Panc1 (cell line): ENCODE measurements at regions of chr5 and their contacts with region 1.

Region 1: GRCh38 chr5:150560401-150561193 is 52.7 kb downstream of the NDST1 start:
- DNase-seq: peak; percentile 74
- ATAC-seq: peak; percentile 86
- H3K4me3 ChIP-seq: 0 out of 4 replicates have a peak overlapping the region, but pooled peaks of 1 of the 2 experiments have one; percentile 3
- H3K27ac ChIP-seq: peak overlapping the region; percentile 81
- H3K4me1 ChIP-seq: peaks cover 45% of the 10 kb centered on the region
- H3K27me3 ChIP-seq: no peaks in the 10 kb centered on the region
- CTCF ChIP-seq: peak; percentile 87

Region 2: DNA sequence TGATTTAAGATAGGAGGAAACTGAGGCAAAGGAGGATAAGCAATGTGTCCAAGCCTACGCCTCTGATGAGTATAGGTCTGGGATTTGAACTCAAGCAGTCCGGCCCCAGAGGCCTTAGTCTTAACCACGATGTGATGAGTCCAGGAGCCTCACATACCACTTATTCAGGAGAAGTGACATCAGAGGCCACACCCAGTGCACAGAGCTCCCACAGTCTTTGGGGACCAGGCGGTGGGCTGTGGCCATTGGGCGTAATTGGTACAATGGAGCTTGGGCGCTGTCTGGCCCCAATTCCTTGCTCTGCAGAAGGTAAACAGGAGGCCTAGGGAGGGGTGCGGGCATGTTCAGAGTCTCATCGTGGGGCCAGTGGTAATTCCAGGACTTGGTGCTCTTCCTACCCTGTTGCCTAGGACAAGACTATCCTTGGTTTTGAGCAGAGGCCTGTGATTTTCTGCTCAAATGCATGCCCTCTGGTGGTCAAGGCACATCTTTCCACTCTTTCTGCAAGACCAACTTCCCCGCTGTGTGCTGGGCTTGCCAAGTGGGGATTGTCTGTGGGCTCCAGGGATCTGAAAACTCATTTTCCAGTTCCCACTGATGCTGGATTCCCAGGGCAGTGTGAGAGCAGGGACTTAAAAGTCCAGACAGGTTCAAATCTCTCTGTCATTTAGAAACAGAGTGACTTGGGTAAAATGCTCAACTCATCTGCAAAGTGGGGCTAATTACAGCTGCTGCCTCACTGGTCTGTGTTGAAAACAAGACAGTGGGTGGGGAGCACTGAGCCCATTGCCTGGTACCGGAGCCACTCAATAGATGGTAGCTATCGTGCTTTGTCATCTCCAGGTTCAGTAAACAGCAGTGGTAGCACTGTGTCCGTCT is 36.9 kb before region 1 on chr5:
- CTCF ChIA-PET with region 1: no interaction called
- POLR2A ChIA-PET with region 1: no interaction called
- in situ Hi-C with region 1: no loop called
- intact Hi-C with region 1: no loop called
- DNase-seq: peak; percentile 41
- ATAC-seq: peak; percentile 80
- H3K4me3 ChIP-seq: no peak overlapping the region
- H3K27ac ChIP-seq: peak overlapping the region; percentile 69
- H3K4me1 ChIP-seq: peaks cover 52% of the 10 kb centered on the region
- H3K27me3 ChIP-seq: no peaks in the 10 kb centered on the region
- CTCF ChIP-seq: peak; percentile 83; the same call in 1 of the 2 replicates

Region 3: DNA sequence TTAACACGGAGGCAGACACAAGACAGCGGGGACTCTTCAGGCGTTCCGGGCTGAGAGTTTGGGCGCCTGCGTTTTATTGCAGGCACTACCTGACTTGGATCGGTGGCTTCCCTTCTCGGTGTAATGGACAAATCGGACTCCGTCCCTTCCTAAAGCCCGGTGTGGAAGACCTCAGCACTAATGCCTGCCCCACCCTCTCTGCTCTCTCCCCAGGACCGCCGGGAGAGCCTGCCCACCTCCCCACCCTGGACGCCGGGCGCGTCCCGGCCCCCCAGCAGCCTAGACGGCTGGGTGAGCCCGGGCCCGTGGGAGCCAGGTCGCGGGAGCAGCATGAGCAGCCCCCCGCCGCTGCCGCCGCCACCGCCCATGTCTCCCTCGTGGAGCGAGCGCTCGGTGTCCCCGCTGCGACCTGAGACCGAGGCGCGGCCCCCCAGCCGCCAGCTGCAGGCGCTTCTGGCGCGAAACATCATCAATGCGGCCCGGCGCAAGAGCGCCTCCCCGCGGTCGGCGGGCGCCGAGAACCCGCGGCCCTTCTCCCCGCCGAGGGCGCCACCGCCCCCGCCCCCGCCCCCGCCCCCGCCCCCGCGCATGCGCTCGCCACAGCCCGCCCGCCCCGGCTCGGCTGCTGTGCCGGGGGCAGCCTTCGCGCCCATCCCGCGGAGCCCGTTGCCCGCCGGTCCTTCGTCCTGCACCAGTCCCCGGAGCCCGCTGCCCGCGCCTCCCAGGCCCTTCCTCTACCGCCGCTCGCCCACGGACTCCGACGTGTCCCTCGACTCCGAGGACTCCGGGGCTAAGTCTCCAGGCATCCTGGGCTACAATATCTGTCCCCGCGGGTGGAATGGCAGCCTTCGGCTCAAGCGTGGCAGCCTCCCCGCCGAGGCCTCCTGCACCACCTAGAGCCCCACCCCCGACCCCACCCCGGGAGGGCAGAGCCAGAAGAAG is 95.9 kb after region 1 on chr5:
- CTCF ChIA-PET with region 1: interaction called, 4 read pairs
- POLR2A ChIA-PET with region 1: interaction called, 3 read pairs
- in situ Hi-C with region 1: no loop called
- intact Hi-C with region 1: loop called (anchors 1 kb)
- DNase-seq: no peak
- ATAC-seq: peak; percentile 80
- H3K4me3 ChIP-seq: peak overlapping the region; percentile 49 to 60
- H3K27ac ChIP-seq: peak overlapping the region; percentile 86
- H3K4me1 ChIP-seq: peaks cover 21% of the 10 kb centered on the region
- H3K27me3 ChIP-seq: no peaks in the 10 kb centered on the region
- CTCF ChIP-seq: peak; percentile 93

Region 4: DNA sequence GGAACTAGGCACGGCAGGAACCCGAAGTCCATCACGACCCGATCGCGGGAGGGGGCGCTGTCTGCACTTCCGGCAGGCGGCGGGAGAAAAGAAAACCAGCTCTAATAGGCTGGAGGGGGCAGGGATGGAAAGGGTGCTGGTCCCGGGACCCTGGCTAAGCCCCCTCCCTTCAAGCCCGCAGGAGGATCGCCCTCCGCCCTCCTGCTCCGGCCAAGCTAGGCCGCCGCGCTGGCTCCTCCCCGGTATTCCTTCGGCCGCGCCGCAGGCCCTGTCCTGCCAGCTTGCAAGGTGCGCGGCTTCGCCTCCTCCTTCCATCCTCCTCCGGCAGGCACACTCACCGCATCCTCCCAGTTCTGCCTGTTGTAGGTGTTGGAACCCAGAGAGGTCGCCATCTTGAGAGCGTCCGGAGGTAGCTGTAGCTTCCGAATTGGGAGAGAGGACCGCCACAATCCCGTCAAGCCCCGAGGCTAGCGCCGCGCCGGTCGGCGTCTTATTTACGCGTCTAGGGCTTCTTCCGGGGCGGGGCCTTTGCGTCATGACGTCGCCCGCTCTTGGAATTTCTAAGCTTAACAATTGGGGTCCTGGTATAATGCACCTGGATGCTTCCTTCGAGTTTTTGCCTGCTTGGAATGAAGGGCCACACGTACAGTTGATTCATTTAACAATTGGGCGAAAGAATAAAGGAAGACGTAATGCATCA is 140.1 kb after region 1 on chr5 and contains the start of gene RBM22:
- CTCF ChIA-PET with region 1: interaction called, 3 read pairs
- POLR2A ChIA-PET with region 1: no interaction called
- in situ Hi-C with region 1: no loop called
- intact Hi-C with region 1: loop called (anchors 5 kb)
- DNase-seq: peak; percentile 62
- ATAC-seq: peak; percentile 98
- H3K4me3 ChIP-seq: peak within 1 kb of the TSS; percentile 89 to 98
- H3K27ac ChIP-seq: peak within 1 kb of the TSS; percentile 90
- H3K4me1 ChIP-seq: peaks cover 14% of the 10 kb centered on the region
- H3K27me3 ChIP-seq: no peaks in the 10 kb centered on the region
- CTCF ChIP-seq: peak; percentile 82
- total RNA-seq, gene RBM22: 54.3 TPM

Region 5: GRCh38 chr5:150801117-150801927 is 240.7 kb after region 1 on chr5:
- CTCF ChIA-PET with region 1: no interaction called
- POLR2A ChIA-PET with region 1: no interaction called
- in situ Hi-C with region 1: no loop called
- intact Hi-C with region 1: loop called (anchors 10 kb)
- DNase-seq: peak; percentile 87
- ATAC-seq: peak; percentile 95
- H3K4me3 ChIP-seq: peak overlapping the region; percentile 38 to 65
- H3K27ac ChIP-seq: peak overlapping the region; percentile 82
- H3K4me1 ChIP-seq: peaks cover 12% of the 10 kb centered on the region
- H3K27me3 ChIP-seq: no peaks in the 10 kb centered on the region
- CTCF ChIP-seq: peak; percentile 82

Region 6: GRCh38 chr5:150846654-150847333 is 286.2 kb after region 1 on chr5:
- CTCF ChIA-PET with region 1: no interaction called
- POLR2A ChIA-PET with region 1: no interaction called
- in situ Hi-C with region 1: no loop called
- intact Hi-C with region 1: loop called (anchors 5 kb)
- DNase-seq: peak; percentile 51
- ATAC-seq: peak; percentile 93
- H3K4me3 ChIP-seq: peak overlapping the region; percentile 5 to 37; a peak in 3 of 4 replicates
- H3K27ac ChIP-seq: no peak overlapping the region
- H3K4me1 ChIP-seq: peaks cover 5% of the 10 kb centered on the region; the same call in 1 of the 2 replicates
- H3K27me3 ChIP-seq: no peaks in the 10 kb centered on the region
- CTCF ChIP-seq: peak; percentile 85

Region 7: GRCh38 chr5:151534350-151534749 is 973.8 kb after region 1 on chr5:
- CTCF ChIA-PET with region 1: no interaction called
- POLR2A ChIA-PET with region 1: no interaction called
- in situ Hi-C with region 1: no loop called
- intact Hi-C with region 1: no loop called
- DNase-seq: no peak
- ATAC-seq: no peak
- H3K4me3 ChIP-seq: no peak overlapping the region
- H3K27ac ChIP-seq: no peak overlapping the region
- H3K4me1 ChIP-seq: no peaks in the 10 kb centered on the region
- H3K27me3 ChIP-seq: peaks cover 4% of the 10 kb centered on the region; the same call in 1 of the 2 replicates
- CTCF ChIP-seq: no peak